HEK293T (cell line): ENCODE measurements at regions of chr11 and their contacts with region 1.

Region 1: DNA sequence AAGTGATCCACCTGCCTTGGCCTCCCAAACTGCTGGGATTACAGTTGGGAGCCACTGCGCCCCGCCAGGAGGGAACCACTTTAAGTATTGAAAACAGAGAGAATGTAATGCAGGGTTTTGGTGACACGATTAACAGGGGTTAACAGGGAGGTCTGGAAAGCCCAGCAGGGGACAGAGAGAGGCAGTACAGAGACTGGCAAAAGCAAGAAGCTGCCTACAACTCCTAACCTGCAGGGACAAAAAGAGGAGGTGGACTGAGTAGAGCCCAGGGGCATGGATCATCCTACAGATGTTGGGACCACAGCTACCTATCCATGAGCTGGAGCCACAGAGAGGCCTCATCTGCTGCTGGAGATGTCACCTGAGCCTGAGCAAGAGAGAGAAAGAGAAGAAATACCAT is 1.7 kb upstream of the SPINDOC start:
- DNase-seq: no peak

Region 2: GRCh38 chr11:63582935-63583677 is 228.4 kb before region 1 on chr11:
- CTCF ChIA-PET with region 1: no interaction called
- POLR2A ChIA-PET with region 1: no interaction called
- DNase-seq: no peak

Region 3: DNA sequence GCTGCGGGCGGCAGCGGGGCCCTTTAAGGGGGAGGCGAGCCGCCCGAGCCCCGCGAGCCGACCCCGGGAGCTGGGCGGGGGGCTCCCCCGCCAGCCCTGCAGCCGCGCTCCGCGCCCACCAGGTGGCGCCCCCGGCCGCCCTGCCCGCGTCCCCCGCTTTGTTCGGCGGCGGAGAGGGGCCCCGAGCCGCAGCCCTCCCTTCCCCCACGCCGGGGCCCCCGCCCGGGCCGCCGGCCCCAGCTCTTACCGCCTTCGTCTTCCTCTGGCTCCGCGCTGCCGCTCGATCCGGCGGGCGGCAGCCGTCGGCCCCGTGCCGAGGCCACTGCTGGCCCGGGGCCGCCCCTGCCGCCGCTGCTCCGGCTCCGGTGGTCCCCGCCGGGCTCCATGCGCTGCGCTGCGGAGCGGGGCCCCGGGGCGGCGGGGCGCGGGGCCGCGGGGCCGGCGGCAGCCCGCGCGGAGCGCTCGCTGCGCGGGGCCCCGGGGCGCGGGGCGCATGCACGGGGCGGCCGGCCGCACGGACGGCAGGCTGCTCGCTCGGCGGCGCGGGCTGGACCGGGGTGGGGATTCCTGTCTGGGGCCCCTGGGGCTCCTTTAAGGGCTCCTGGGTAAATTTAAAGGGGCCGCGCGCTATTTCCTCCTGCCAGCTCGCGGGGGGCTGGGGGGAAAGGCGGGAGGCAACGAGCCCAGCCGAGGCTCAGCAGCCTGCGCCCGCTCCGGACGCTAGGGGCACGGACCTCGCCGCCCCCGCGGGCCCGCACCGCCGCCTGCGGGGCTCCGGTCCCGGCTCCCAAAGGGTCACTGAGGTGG is 43.1 kb before region 1 on chr11 and contains the start of gene ZFTA:
- CTCF ChIA-PET with region 1: no interaction called
- POLR2A ChIA-PET with region 1: interaction called, 10 read pairs
- DNase-seq: peak; percentile 84

Region 4: GRCh38 chr11:63793161-63793560 is 18.4 kb before region 1 on chr11:
- CTCF ChIA-PET with region 1: no interaction called
- POLR2A ChIA-PET with region 1: no interaction called
- DNase-seq: no peak